Heart left ventricle (tissue), 16 donors: ENCODE measurements at regions of chr5 and their contacts with region 1.

Region 1: GRCh38 chr5:1167728-1168709 is 33.4 kb upstream of the SLC6A19 start:
- DNase-seq: peak; percentile 64 to 80 (median 69)
- ATAC-seq: peak; percentile 62 to 84 (median 71)
- H3K4me3 ChIP-seq: peak overlapping the region in 6 of 12 donors; percentile 5 to 32 (median 13)
- H3K27ac ChIP-seq: no peak overlapping the region
- H3K4me1 ChIP-seq: peaks cover 0 to 12% (median 7%) of the 10 kb centered on the region in 12 donors
- H3K27me3 ChIP-seq: peaks cover 0 to 8% (median 0%) of the 10 kb centered on the region in 9 donors
- CTCF ChIP-seq: peak; percentile 40 to 73 (median 62)
- POLR2A ChIP-seq: no peak

Region 2: GRCh38 chr5:989961-990530 is 178.0 kb before region 1 on chr5:
- intact Hi-C with region 1: loop called in 1 of 10 experiments (anchors 5 kb)
- DNase-seq: peak; percentile 77 to 84 (median 80)
- ATAC-seq: peak; percentile 60 to 89 (median 71)
- H3K4me3 ChIP-seq: no peak overlapping the region
- H3K27ac ChIP-seq: peak overlapping the region; percentile 24 to 75 (median 57)
- H3K4me1 ChIP-seq: peaks cover 0 to 50% (median 18%) of the 10 kb centered on the region in 12 donors
- H3K27me3 ChIP-seq: no peaks in the 10 kb centered on the region
- CTCF ChIP-seq: peak; percentile 55 to 80 (median 70)
- POLR2A ChIP-seq: no peak

Region 3: GRCh38 chr5:1080432-1080831 is 87.6 kb before region 1 on chr5:
- intact Hi-C with region 1: no loop called
- DNase-seq: peak in 1 of 5 donors; percentile 68
- ATAC-seq: peak in 3 of 4 donors; percentile 20 to 45 (median 23)
- H3K4me3 ChIP-seq: no peak overlapping the region
- H3K27ac ChIP-seq: no peak overlapping the region
- H3K4me1 ChIP-seq: peaks cover 0 to 5% (median 0%) of the 10 kb centered on the region in 12 donors
- H3K27me3 ChIP-seq: no peaks in the 10 kb centered on the region
- CTCF ChIP-seq: no peak
- POLR2A ChIP-seq: no peak